Spleen (tissue), 13 donors: ENCODE measurements at regions of chr7 and their contacts with region 1.

Region 1: GRCh38 chr7:72161534-72161933 is 250.6 kb downstream of the CALN1 start:
- DNase-seq: no peak
- H3K4me3 ChIP-seq: no peak overlapping the region
- H3K27ac ChIP-seq: no peak overlapping the region
- H3K4me1 ChIP-seq: no peaks in the 10 kb centered on the region
- H3K27me3 ChIP-seq: no peaks in the 10 kb centered on the region
- CTCF ChIP-seq: no peak
- POLR2A ChIP-seq: no peak

Region 2: DNA sequence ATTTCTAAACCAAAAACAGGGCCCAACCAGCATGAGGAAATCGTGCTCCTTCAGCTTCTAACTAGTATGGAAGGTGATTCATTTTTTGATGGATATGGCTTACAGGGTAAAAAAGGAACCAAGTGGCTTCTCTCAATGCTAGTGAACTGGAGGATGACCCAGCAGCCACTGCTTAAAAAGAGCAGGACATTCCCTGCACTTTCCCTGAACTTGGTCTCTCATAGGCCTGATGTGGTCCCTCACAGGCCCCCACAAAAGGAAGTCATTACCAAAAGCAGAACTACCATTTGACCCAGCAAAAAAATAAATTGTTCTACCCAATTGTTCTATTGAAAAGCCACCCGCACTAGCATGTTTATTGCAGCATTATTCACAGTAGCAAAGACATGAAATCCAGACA is 61.8 kb after region 1 on chr7:
- intact Hi-C with region 1: loop called (anchors 10 kb)
- DNase-seq: no peak
- H3K4me3 ChIP-seq: no peak overlapping the region
- H3K27ac ChIP-seq: no peak overlapping the region
- H3K4me1 ChIP-seq: no peaks in the 10 kb centered on the region
- H3K27me3 ChIP-seq: no peaks in the 10 kb centered on the region
- CTCF ChIP-seq: no peak
- POLR2A ChIP-seq: no peak

Region 3: GRCh38 chr7:72386118-72386517 is 224.6 kb after region 1 on chr7:
- intact Hi-C with region 1: no loop called
- DNase-seq: no peak
- H3K4me3 ChIP-seq: no peak overlapping the region
- H3K27ac ChIP-seq: no peak overlapping the region
- H3K4me1 ChIP-seq: no peaks in the 10 kb centered on the region
- H3K27me3 ChIP-seq: no peaks in the 10 kb centered on the region
- CTCF ChIP-seq: no peak
- POLR2A ChIP-seq: no peak